ENCODE measurements at regions of chr4 and their contacts with region 1.

Region 1: DNA sequence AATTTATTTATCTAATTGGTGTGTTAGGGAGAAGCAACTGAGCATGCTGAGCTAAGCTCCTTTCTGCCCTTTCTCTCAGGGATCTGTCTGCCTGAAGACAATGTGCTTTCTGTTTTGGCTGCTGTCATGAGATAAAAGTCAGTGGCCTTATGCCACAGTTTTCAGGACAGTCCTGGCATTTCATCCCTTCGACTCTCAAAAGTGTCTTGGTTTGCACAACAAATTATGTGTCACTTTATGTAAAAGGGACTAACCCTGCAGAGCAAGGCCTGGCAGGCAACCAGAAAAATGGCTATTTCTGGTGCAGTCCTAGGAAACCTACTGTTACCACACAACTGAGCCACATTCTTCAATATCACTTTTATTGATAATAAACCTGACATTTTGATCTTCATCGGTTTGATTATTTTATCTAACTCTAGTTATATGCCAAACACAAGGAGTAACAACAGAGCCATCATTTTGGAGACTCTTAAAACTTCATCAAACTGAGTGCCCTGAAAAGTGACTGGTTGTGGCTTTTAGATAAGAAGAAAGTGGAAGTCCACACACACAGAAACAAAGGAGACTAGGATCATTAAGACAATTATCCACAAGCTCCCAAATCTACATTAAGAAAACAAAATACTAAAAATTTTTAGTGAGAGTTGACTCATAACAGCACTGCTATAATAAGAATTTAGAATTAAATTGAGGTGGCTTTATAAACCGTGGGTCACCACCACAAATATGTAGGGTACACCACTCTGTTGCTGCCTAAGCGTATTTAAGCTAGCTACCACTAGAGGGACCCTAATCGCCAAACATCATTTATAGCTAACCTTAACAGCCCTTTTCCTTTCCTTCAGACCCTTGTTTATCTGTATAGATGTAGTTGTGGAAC is 95.9 kb upstream of the PTPN13 start:
- DNase-seq: no peak
- ATAC-seq: peak; percentile 93
- H3K4me3 ChIP-seq: no peak overlapping the region
- H3K27ac ChIP-seq: no peak overlapping the region
- H3K4me1 ChIP-seq: no peaks in the 10 kb centered on the region
- H3K27me3 ChIP-seq: no peaks in the 10 kb centered on the region
- CTCF ChIP-seq: peak; percentile 74 to 85 (median 84); a peak in 5 of 6 replicates
- EP300 ChIP-seq: no peak
- POLR2A ChIP-seq: no peak
- RAD21 ChIP-seq: peak; percentile 88

Region 2: DNA sequence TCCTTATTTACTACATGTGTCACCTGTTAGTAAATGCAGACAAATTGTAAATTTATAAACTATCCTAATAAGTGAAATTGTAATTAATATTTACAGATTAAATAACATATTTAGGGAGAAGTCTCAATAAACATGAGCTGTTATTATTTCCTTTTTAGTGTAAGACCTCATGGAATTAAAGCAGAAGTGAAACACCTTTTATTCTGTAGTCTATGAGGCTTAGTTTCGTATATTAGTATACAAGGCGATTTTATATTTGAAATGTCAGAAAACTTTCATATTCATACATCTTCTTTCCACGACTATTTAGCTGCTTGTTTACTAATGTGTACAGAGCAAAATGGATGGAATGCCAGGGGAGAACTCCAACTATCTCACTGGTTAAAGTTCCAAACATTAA is 608.9 kb before region 1 on chr4:
- CTCF ChIA-PET with region 1: no interaction called
- POLR2A ChIA-PET with region 1: no interaction called
- RAD21 ChIA-PET with region 1: no interaction called
- SMC1A ChIA-PET with region 1: no interaction called
- in situ Hi-C with region 1: no loop called
- intact Hi-C with region 1: no loop called
- DNase-seq: no peak
- ATAC-seq: 0 out of 3 replicates have a peak, but pooled peaks have one; percentile 23
- H3K4me3 ChIP-seq: no peak overlapping the region
- H3K27ac ChIP-seq: no peak overlapping the region
- H3K4me1 ChIP-seq: no peaks in the 10 kb centered on the region
- H3K27me3 ChIP-seq: no peaks in the 10 kb centered on the region
- CTCF ChIP-seq: no peak
- EP300 ChIP-seq: no peak
- POLR2A ChIP-seq: no peak
- RAD21 ChIP-seq: no peak

Region 3: DNA sequence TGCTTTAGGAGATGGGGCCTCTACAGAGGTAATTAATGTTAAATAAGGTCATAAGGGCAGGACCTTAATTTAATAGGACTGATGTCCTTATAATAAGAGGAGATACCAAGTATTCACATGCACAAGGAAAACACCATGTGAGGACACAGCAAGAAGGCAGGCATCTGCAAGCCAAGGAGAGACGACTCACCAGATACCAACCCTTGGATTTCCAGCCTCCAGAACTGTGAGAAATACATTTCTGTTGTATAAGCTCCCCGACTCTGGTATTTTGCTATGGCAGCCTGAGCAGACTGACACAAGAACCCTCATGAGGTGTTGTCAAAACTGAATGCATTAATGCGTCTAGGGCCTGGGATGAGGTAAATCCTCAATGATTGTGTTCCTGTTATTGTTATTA is 82.1 kb before region 1 on chr4:
- CTCF ChIA-PET with region 1: no interaction called
- POLR2A ChIA-PET with region 1: no interaction called
- RAD21 ChIA-PET with region 1: no interaction called
- SMC1A ChIA-PET with region 1: no interaction called
- in situ Hi-C with region 1: no loop called
- intact Hi-C with region 1: no loop called
- DNase-seq: no peak
- ATAC-seq: no peak
- H3K4me3 ChIP-seq: no peak overlapping the region
- H3K27ac ChIP-seq: no peak overlapping the region
- H3K4me1 ChIP-seq: no peaks in the 10 kb centered on the region
- H3K27me3 ChIP-seq: no peaks in the 10 kb centered on the region
- CTCF ChIP-seq: no peak
- EP300 ChIP-seq: no peak
- POLR2A ChIP-seq: no peak
- RAD21 ChIP-seq: no peak

Region 4: DNA sequence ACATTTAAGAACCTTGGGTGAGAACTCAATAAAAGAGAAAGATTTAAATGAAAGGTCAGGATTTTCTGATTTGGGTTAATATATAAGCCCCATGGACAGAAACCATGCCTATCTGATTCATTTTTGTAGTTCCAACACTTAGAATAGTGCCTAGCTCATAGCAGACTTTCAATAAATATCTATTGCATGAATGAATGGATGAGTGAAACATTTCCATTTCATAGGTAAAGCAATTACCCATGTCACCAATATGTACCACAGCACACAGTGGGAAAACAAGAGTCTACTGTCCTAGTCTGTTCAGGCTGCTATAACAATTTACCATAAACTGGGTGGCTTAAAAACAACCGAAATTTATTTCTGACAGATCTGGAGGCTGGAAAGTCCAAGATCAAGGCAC is 32.0 kb after region 1 on chr4:
- CTCF ChIA-PET with region 1: interaction called, 210 read pairs
- POLR2A ChIA-PET with region 1: no interaction called
- RAD21 ChIA-PET with region 1: interaction called, 136 read pairs
- SMC1A ChIA-PET with region 1: interaction called, 13 read pairs
- in situ Hi-C with region 1: no loop called
- intact Hi-C with region 1: no loop called
- DNase-seq: no peak
- ATAC-seq: peak; percentile 87
- H3K4me3 ChIP-seq: no peak overlapping the region
- H3K27ac ChIP-seq: no peak overlapping the region
- H3K4me1 ChIP-seq: no peaks in the 10 kb centered on the region
- H3K27me3 ChIP-seq: no peaks in the 10 kb centered on the region; a peak in 1 of 4 replicates
- CTCF ChIP-seq: no peak
- EP300 ChIP-seq: peak in 1 of 2 experiments; percentile 29; a peak in 1 of 4 replicates
- POLR2A ChIP-seq: no peak
- RAD21 ChIP-seq: no peak

Region 5: DNA sequence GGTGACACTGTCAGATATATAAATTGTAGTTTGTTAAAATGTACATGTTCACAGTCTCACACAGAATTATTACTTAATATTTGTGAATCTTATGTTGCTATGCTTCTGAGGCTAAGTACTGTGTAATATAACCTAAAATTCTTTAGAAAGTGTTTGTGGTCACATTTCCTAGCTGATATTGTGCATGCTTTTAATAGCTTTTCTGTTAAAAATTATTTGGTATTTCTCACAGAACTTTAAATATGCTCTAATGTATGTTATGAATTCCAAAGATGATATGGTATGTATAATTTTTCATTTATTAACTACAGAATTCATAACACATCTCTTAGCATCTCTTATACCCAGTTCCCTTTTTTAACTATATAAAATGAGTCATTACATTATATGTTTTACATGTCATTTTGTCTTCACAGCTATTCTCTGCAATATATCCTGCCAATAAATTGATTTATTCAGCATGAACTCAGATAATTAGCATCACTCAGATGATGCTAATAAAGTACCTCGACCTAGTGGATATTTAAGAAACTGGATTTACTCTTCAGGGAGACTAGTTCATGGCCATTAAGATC is 105.2 kb after region 1 on chr4:
- CTCF ChIA-PET with region 1: interaction called, 51 read pairs
- POLR2A ChIA-PET with region 1: no interaction called
- RAD21 ChIA-PET with region 1: interaction called, 44 read pairs
- SMC1A ChIA-PET with region 1: interaction called, 85 read pairs
- in situ Hi-C with region 1: no loop called
- intact Hi-C with region 1: no loop called
- DNase-seq: no peak
- ATAC-seq: peak; percentile 40
- H3K4me3 ChIP-seq: no peak overlapping the region
- H3K27ac ChIP-seq: no peak overlapping the region
- H3K4me1 ChIP-seq: no peaks in the 10 kb centered on the region
- H3K27me3 ChIP-seq: no peaks in the 10 kb centered on the region
- CTCF ChIP-seq: no peak
- EP300 ChIP-seq: no peak
- POLR2A ChIP-seq: no peak
- RAD21 ChIP-seq: no peak

Region 6: GRCh38 chr4:86664959-86665358 is 166.7 kb after region 1 on chr4:
- CTCF ChIA-PET with region 1: interaction called, 16 read pairs
- POLR2A ChIA-PET with region 1: no interaction called
- RAD21 ChIA-PET with region 1: interaction called, 14 read pairs
- SMC1A ChIA-PET with region 1: interaction called, 16 read pairs
- in situ Hi-C with region 1: no loop called
- intact Hi-C with region 1: no loop called
- DNase-seq: no peak
- ATAC-seq: peak; percentile 55
- H3K4me3 ChIP-seq: no peak overlapping the region
- H3K27ac ChIP-seq: no peak overlapping the region
- H3K4me1 ChIP-seq: no peaks in the 10 kb centered on the region
- H3K27me3 ChIP-seq: no peaks in the 10 kb centered on the region
- CTCF ChIP-seq: no peak
- EP300 ChIP-seq: no peak
- POLR2A ChIP-seq: no peak
- RAD21 ChIP-seq: no peak

Region 7: GRCh38 chr4:86778175-86778574 is 280.0 kb after region 1 on chr4:
- CTCF ChIA-PET with region 1: interaction called, 36 read pairs
- POLR2A ChIA-PET with region 1: no interaction called
- RAD21 ChIA-PET with region 1: interaction called, 15 read pairs
- SMC1A ChIA-PET with region 1: interaction called, 19 read pairs
- in situ Hi-C with region 1: no loop called
- intact Hi-C with region 1: no loop called
- DNase-seq: no peak
- ATAC-seq: no peak
- H3K4me3 ChIP-seq: no peak overlapping the region
- H3K27ac ChIP-seq: no peak overlapping the region
- H3K4me1 ChIP-seq: no peaks in the 10 kb centered on the region
- H3K27me3 ChIP-seq: no peaks in the 10 kb centered on the region
- CTCF ChIP-seq: no peak
- EP300 ChIP-seq: no peak
- POLR2A ChIP-seq: no peak
- RAD21 ChIP-seq: no peak

Region 8: GRCh38 chr4:86918539-86919072 is 420.4 kb after region 1 on chr4:
- CTCF ChIA-PET with region 1: interaction called, 28 read pairs
- POLR2A ChIA-PET with region 1: no interaction called
- RAD21 ChIA-PET with region 1: interaction called, 16 read pairs
- SMC1A ChIA-PET with region 1: interaction called, 11 read pairs
- in situ Hi-C with region 1: no loop called
- intact Hi-C with region 1: no loop called
- DNase-seq: no peak
- ATAC-seq: peak; percentile 53
- H3K4me3 ChIP-seq: no peak overlapping the region
- H3K27ac ChIP-seq: no peak overlapping the region
- H3K4me1 ChIP-seq: peaks cover 3% of the 10 kb centered on the region; the same call in 1 of the 2 replicates
- H3K27me3 ChIP-seq: no peaks in the 10 kb centered on the region
- CTCF ChIP-seq: no peak
- EP300 ChIP-seq: no peak
- POLR2A ChIP-seq: no peak
- RAD21 ChIP-seq: no peak

Measured in GM12878 (cell line).